ENCODE measurements at regions of chr2 and their contacts with region 1.

Region 1: DNA sequence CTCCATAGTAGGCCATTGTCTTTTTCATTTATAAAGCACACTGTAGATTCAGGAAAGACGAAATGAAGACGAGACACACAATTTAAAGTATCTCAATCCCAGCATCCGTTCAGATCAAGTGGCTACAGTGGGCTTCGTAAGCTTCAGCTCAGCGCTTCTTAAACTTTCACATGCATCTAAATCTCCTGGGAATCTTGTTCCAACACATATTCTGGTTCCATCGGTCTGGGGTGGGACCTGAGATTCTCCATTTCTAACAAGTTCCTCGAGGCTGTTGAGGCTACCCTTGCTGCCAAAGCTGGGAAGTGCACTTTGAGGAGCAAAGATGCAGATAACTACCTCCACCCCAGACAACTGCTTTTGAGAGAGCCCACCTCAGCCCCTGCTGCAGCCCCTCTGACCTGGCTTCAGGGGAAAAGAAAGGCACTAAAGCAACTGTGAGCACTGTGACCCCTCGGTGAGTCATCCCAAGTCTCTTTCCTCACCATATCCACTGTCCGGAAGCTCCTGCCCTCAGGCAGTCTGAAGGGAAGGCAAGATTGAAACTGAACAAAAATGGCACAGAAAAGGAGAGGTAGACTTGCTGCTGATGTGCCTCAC is 201.1 kb upstream of the FBXO11 start:
- DNase-seq: peak in 2 of 14 experiments; percentile 20 to 34
- ATAC-seq: no peak
- H3K4me3 ChIP-seq: no peak overlapping the region
- H3K4me3 Mint-ChIP-seq: no peak overlapping the region
- H3K27ac ChIP-seq: no peak overlapping the region
- H3K27ac Mint-ChIP-seq: no peak overlapping the region
- H3K4me1 ChIP-seq: peaks cover 18% of the 10 kb centered on the region
- H3K4me1 Mint-ChIP-seq: peaks cover 11% of the 10 kb centered on the region
- H3K27me3 ChIP-seq: no peaks in the 10 kb centered on the region
- H3K27me3 Mint-ChIP-seq: no peaks in the 10 kb centered on the region
- CTCF ChIP-seq: no peak

Region 2: DNA sequence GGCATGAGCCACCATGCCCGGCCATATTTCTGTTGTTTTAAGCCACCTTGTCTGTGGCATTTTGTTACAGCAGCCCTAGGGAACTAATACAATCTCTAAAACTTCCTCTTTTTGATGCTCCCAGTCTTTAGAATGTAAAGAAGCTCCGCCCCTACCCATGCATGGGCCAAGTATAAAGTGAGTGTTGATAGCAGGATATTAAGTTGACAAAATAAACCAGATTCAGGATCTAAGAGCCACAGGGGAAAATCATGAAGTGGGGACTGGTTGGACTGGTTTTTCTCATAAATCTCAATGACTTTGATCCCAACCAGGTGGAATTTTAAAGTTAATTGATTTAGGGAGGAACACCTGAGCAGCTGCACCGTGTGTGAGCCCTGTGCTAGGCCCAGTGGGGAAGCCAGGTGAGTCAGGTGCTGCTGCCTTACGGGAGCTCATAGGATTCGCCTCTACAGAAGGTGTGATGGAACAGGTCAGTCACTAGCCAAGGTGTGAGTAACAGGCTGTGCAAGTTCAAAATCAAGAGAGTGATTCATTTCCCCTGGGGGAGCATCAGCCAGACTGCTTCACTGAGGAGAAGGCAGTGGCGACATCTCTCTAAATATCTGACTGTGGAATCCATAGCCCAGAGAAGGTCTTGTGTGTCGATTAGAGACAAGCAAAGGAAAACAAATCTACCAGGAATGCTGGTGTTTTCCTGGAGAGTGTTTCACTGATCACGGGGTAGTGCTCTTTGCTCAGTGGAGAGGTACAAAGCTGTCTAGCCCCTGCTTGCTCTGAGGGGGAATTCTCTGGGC is 767.5 kb before region 1 on chr2:
- CTCF ChIA-PET with region 1: no interaction called
- POLR2A ChIA-PET with region 1: no interaction called
- intact Hi-C with region 1: loop called (anchors 5 kb)
- DNase-seq: no peak
- ATAC-seq: no peak
- H3K4me3 ChIP-seq: no peak overlapping the region
- H3K4me3 Mint-ChIP-seq: no peak overlapping the region
- H3K27ac ChIP-seq: no peak overlapping the region
- H3K27ac Mint-ChIP-seq: no peak overlapping the region
- H3K4me1 ChIP-seq: peaks cover 2% of the 10 kb centered on the region
- H3K4me1 Mint-ChIP-seq: peaks cover 4% of the 10 kb centered on the region
- H3K27me3 ChIP-seq: peaks cover 2 to 11% of the 10 kb centered on the region in 2 experiments
- H3K27me3 Mint-ChIP-seq: peaks cover 12% of the 10 kb centered on the region
- CTCF ChIP-seq: no peak

Region 3: GRCh38 chr2:47414682-47415458 is 692.6 kb before region 1 on chr2:
- CTCF ChIA-PET with region 1: no interaction called
- POLR2A ChIA-PET with region 1: no interaction called
- intact Hi-C with region 1: loop called in 1 of 2 experiments (anchors 10 kb)
- DNase-seq: no peak
- ATAC-seq: no peak
- H3K4me3 ChIP-seq: no peak overlapping the region
- H3K4me3 Mint-ChIP-seq: no peak overlapping the region
- H3K27ac ChIP-seq: no peak overlapping the region
- H3K27ac Mint-ChIP-seq: no peak overlapping the region
- H3K4me1 ChIP-seq: no peaks in the 10 kb centered on the region
- H3K4me1 Mint-ChIP-seq: no peaks in the 10 kb centered on the region
- H3K27me3 ChIP-seq: no peaks in the 10 kb centered on the region
- H3K27me3 Mint-ChIP-seq: no peaks in the 10 kb centered on the region
- CTCF ChIP-seq: no peak

Region 4: GRCh38 chr2:48066000-48066399 is 41.4 kb before region 1 on chr2:
- CTCF ChIA-PET with region 1: no interaction called
- POLR2A ChIA-PET with region 1: no interaction called
- intact Hi-C with region 1: no loop called
- DNase-seq: no peak
- ATAC-seq: no peak
- H3K4me3 ChIP-seq: no peak overlapping the region
- H3K4me3 Mint-ChIP-seq: no peak overlapping the region
- H3K27ac ChIP-seq: no peak overlapping the region
- H3K27ac Mint-ChIP-seq: no peak overlapping the region
- H3K4me1 ChIP-seq: no peaks in the 10 kb centered on the region
- H3K4me1 Mint-ChIP-seq: no peaks in the 10 kb centered on the region
- H3K27me3 ChIP-seq: no peaks in the 10 kb centered on the region
- H3K27me3 Mint-ChIP-seq: peaks cover 34% of the 10 kb centered on the region
- CTCF ChIP-seq: no peak